GM10248 (cell line): ENCODE measurements at regions of chr12 and their contacts with region 1.

Region 1: DNA sequence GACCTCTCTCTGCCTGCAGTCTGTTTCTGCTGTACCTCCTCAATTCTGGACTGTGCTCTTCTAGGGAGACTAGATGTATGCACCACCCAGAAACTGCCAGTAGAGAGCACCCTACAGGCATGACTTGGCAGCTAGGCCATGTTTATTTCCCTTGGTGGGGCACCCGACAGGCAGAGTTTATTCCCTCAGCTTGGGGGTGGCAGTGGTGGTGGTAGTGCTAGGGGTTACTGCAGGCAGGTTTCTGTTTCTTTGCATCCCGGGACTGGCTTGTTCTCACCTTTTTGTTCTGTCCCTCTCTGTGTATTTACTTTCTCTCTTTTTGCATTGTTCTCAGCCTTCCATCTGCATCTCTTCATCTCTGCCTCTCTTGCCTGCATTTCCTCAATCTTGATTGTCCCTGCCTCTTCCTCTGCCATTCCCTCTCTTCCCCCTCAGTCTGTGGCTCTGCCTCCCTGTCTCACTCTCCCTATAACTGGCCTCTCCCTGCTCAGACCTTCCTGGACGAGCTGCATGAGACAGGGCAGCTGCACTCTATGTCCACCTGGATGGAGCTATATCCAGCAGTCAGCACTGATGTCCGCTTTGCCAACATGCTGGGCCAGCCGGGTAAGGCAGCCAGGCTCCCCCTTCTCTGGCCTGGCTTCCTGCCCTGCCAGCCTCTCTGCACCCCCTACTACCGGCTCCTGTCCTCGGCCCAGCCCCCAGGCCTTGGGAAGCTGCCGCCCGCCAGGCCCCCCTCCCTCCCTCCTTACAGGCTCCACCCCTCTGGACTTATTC is 13.8 kb downstream of the PRPF40B start:
- DNase-seq: peak; percentile 82
- CTCF ChIP-seq: peak; percentile 73

Region 2: GRCh38 chr12:49146406-49146805 is 490.8 kb before region 1 on chr12:
- CTCF ChIA-PET with region 1: no interaction called
- POLR2A ChIA-PET with region 1: no interaction called
- DNase-seq: no peak
- CTCF ChIP-seq: no peak

Region 3: DNA sequence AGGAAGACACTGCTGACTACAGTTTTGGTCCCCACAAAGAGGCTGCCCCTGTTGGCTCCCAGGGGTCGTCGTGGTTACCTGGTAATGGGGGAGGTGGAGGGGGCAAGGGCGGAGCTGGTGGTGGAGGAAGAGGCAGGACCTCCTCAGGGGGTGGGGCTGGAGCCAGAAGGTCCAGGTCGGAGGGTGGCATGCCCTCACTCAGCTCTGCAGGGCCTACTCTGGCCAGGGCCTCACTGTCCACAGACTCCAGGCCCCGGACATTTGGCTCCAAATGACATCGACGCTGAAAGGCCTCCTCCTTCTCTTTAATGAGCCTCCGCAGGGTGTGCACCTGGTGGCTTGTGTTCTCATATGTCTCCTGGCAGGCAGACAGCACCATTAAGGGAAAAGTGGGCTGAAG is 14.7 kb after region 1 on chr12:
- CTCF ChIA-PET with region 1: interaction called, 37 read pairs
- POLR2A ChIA-PET with region 1: no interaction called
- DNase-seq: no peak
- CTCF ChIP-seq: no peak

Region 4: DNA sequence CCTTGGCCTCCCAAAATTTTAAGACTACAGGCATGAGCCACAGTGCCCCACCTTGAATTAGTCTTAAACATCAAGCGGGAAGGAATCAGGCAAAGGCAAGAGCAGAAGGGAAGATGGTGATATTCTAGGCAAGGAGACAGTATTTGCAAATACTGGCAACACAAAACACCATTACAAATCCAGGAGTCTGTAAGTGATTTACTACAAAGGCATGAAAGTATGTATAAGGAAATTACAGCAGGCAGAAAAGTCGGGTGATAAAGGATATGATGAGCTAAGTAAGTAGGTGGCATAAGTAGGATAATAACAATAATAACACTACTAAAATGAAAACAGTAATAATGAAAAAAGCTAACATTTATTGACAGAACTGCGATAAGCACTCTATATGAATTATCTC is 41.5 kb after region 1 on chr12:
- CTCF ChIA-PET with region 1: interaction called, 29 read pairs
- POLR2A ChIA-PET with region 1: interaction called, 3 read pairs
- DNase-seq: no peak
- CTCF ChIP-seq: no peak

Region 5: GRCh38 chr12:49707128-49707811 is 70.1 kb after region 1 on chr12 and contains the start of gene FMNL3:
- CTCF ChIA-PET with region 1: interaction called, 350 read pairs
- POLR2A ChIA-PET with region 1: no interaction called
- DNase-seq: peak; percentile 99
- CTCF ChIP-seq: peak; percentile 91